Activated CD4-positive, alpha-beta memory T cell treated with anti-CD3 and anti-CD28 coated beads, Interleukin-2, amount 10 ng/mL, durations not matched to agents 7 days and 5 days (primary cell): ENCODE measurements at regions of chr1 and their contacts with region 1.

Region 1: DNA sequence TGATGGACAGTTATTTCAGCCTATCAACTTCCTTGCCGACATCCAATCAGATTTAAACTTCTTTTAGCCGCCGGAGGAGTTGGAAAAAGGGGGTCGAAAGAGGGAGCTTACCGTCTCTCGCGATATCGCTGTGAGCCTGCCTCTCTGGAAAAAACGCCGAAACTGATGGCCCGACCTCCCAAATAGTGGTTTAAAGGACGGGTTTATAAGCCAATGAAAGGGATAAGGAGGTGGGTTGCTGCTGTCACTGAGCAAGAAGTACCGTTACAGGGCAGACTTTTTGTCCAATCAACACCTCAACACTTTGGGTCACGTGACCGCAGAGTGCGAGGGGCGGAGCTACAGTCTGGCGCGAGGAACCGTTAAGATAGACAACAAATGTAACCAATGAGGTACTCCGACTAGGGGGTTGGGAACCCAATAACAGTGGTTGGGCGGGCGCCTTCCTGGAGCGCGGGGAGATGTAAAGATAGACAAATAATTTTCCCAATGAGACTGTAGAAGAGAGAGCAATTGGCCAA is at the start of gene RBM15:
- DNase-seq: peak; percentile 98
- H3K4me3 Mint-ChIP-seq: no peak within 1 kb of the TSS
- H3K27ac Mint-ChIP-seq: no peak within 1 kb of the TSS
- H3K4me1 Mint-ChIP-seq: peaks cover 60% of the 10 kb centered on the region
- H3K27me3 Mint-ChIP-seq: no peaks in the 10 kb centered on the region
- total RNA-seq, gene RBM15: 63.4 to 68.1 TPM

Region 2: DNA sequence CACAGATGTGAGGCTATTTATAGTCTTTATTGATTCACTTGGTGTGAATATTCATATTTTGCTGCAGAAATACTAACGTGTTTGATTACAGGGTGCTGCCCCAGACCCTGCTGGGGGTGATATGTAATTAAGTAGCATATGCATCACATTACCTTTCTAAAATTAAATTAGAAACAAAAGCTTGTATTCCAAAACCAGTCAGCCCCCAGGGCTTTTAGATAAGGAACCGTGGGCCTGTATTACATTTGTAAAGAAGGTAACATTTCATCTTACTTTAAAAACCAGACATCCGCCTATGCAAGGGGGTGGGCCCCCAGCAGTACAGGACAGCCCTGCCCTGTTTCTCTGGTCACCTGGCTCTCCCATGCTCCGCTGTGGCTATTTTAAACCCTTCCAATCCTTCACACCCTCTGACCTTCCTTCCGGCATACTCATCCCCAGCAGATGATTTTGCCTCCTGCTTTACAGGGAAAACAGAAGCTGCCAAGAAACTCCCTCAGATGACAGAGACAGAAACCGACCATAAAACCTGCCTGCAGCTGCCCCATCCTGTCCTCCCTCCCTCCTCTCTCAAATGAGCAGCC is 150.8 kb before region 1 on chr1:
- CTCF ChIA-PET with region 1: no interaction called
- POLR2A ChIA-PET with region 1: no interaction called
- DNase-seq: no peak
- H3K4me3 Mint-ChIP-seq: no peak overlapping the region
- H3K27ac Mint-ChIP-seq: no peak overlapping the region
- H3K4me1 Mint-ChIP-seq: no peaks in the 10 kb centered on the region
- H3K27me3 Mint-ChIP-seq: peaks cover 35% of the 10 kb centered on the region

Region 3: DNA sequence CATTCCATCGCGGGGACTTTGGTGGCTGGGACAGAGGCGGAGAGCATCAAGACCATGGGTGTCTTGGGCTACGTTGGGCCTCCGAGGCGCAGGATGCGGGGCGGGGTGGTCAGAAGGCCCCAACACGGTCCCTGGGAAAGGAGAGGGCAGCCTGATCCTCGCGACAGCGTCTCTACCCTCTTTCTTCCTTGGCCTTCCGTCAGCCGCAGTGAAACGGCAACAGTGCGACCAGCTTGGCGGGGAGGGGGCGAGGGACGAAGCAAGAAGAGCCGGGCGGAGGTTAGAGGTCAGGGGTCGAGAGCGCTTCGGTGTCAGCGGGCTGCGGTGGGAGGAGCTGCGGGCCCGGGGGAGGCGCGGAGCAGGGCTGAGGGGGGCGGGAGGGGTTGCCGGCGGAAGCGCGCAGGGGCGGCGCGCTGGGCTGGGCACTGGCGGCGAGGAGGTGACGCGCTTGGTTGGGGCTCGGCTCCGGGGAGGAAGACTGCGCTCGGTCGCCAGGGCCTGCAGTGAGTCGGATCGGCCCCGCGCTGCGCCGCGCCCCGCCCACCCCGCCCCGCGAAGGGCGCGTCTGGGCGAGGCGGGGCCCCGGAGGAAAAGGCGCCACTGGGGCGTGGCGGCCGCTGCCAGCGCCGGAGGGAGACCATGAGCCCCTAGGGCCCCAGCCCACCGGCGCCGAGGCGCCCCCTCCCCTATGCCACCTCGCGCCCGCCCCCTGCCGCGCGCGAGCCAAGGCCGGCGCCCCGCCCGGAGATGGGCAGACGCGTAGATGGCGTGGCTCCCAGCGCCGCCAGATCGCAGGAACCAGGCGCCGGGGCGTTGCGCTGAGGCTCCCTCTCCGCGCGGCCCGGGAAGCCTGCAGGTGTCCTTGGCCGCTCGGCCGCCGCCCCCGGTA is 129.0 kb before region 1 on chr1 and contains the start of gene KCNC4:
- CTCF ChIA-PET with region 1: interaction called, 86 read pairs
- POLR2A ChIA-PET with region 1: interaction called, 142 read pairs
- DNase-seq: peak; percentile 95
- H3K4me3 Mint-ChIP-seq: peak within 1 kb of the TSS; percentile 81
- H3K27ac Mint-ChIP-seq: peak within 1 kb of the TSS; percentile 88
- H3K4me1 Mint-ChIP-seq: peaks cover 46% of the 10 kb centered on the region
- H3K27me3 Mint-ChIP-seq: peaks cover 9% of the 10 kb centered on the region
- total RNA-seq, gene KCNC4: 6.8 to 8.1 TPM

Region 4: DNA sequence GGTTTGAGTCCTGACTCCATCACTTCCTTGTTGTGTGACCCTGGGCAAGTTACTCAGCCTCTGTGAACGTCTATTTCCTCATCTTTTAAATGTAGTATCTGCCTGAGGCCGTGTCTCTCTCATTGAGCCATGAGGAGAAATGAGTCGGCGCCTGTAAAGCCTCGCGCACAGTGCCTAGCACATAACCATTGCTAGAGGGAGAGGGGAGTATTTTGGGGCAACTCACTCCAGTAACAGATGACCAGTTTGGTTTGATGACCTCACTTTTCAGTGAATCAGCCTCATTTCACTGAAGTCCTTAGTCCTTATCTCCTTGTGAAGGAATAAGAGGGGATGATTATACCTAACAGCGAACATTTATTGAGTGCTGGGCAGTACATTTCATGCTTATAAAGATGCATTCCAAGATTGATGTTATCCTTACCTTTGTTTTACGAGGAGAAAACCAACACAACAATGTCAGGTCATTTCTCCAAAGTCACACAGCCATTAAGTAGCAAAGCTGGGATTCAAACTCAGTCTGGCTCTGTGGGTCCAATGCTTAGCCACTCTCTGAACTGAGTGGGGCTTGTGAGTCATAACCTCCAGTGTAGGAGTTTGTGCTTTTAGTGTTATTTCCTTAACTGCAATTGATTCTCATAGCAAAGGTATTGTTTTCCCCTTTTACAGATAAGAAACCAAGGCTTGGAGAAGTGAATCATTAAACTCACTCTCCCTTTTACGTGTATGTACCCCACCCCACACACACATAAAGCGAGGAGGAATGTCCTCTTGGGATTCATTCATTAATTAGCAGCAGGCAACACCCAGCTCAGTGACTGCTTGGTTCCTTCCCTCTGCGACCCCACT is 102.9 kb before region 1 on chr1:
- CTCF ChIA-PET with region 1: no interaction called
- POLR2A ChIA-PET with region 1: no interaction called
- DNase-seq: no peak
- H3K4me3 Mint-ChIP-seq: no peak overlapping the region
- H3K27ac Mint-ChIP-seq: peak overlapping the region; percentile 40
- H3K4me1 Mint-ChIP-seq: peaks cover 21% of the 10 kb centered on the region
- H3K27me3 Mint-ChIP-seq: no peaks in the 10 kb centered on the region

Region 5: GRCh38 chr1:110250749-110251148 is 88.2 kb before region 1 on chr1:
- CTCF ChIA-PET with region 1: no interaction called
- POLR2A ChIA-PET with region 1: no interaction called
- DNase-seq: no peak
- H3K4me3 Mint-ChIP-seq: no peak overlapping the region
- H3K27ac Mint-ChIP-seq: no peak overlapping the region
- H3K4me1 Mint-ChIP-seq: no peaks in the 10 kb centered on the region
- H3K27me3 Mint-ChIP-seq: no peaks in the 10 kb centered on the region

Region 6: GRCh38 chr1:110370827-110371226 is 31.9 kb after region 1 on chr1:
- CTCF ChIA-PET with region 1: interaction called, 7 read pairs
- POLR2A ChIA-PET with region 1: interaction called, 15 read pairs
- DNase-seq: no peak
- H3K4me3 Mint-ChIP-seq: no peak overlapping the region
- H3K27ac Mint-ChIP-seq: no peak overlapping the region
- H3K4me1 Mint-ChIP-seq: peaks cover 14% of the 10 kb centered on the region
- H3K27me3 Mint-ChIP-seq: no peaks in the 10 kb centered on the region

Region 7: GRCh38 chr1:110412576-110412975 is 73.6 kb after region 1 on chr1:
- CTCF ChIA-PET with region 1: interaction called, 23 read pairs
- POLR2A ChIA-PET with region 1: interaction called, 94 read pairs
- DNase-seq: peak; percentile 71
- H3K4me3 Mint-ChIP-seq: no peak overlapping the region
- H3K27ac Mint-ChIP-seq: no peak overlapping the region
- H3K4me1 Mint-ChIP-seq: peaks cover 13% of the 10 kb centered on the region
- H3K27me3 Mint-ChIP-seq: no peaks in the 10 kb centered on the region

Region 8: GRCh38 chr1:110872745-110873720 is 534.1 kb after region 1 on chr1 and contains the start of gene CD53:
- CTCF ChIA-PET with region 1: no interaction called
- POLR2A ChIA-PET with region 1: interaction called, 28 read pairs
- DNase-seq: peak; percentile 64
- H3K4me3 Mint-ChIP-seq: peak within 1 kb of the TSS; percentile 97
- H3K27ac Mint-ChIP-seq: peak within 1 kb of the TSS; percentile 97
- H3K4me1 Mint-ChIP-seq: peaks cover 34% of the 10 kb centered on the region
- H3K27me3 Mint-ChIP-seq: no peaks in the 10 kb centered on the region
- total RNA-seq, gene CD53: 657 to 659 TPM